Caco-2 (cell line): ENCODE measurements at regions of chr21 and their contacts with region 1.

Region 1: GRCh38 chr21:15552914-15553494 is 176.8 kb upstream of the USP25 start:
- DNase-seq: no peak
- H3K4me3 ChIP-seq: no peak overlapping the region
- H3K4me3 Mint-ChIP-seq: no peak overlapping the region
- H3K27ac Mint-ChIP-seq: no peak overlapping the region
- H3K4me1 ChIP-seq: no peaks in the 10 kb centered on the region
- H3K4me1 Mint-ChIP-seq: peaks cover 7% of the 10 kb centered on the region
- H3K27me3 ChIP-seq: no peaks in the 10 kb centered on the region
- H3K27me3 Mint-ChIP-seq: no peaks in the 10 kb centered on the region
- CTCF ChIP-seq: peak; percentile 43 to 47

Region 2: GRCh38 chr21:15353546-15353945 is 199.5 kb before region 1 on chr21:
- CTCF ChIA-PET with region 1: no interaction called
- POLR2A ChIA-PET with region 1: no interaction called
- intact Hi-C with region 1: no loop called
- DNase-seq: no peak
- H3K4me3 ChIP-seq: no peak overlapping the region
- H3K4me3 Mint-ChIP-seq: no peak overlapping the region
- H3K27ac Mint-ChIP-seq: no peak overlapping the region
- H3K4me1 ChIP-seq: no peaks in the 10 kb centered on the region
- H3K4me1 Mint-ChIP-seq: no peaks in the 10 kb centered on the region
- H3K27me3 ChIP-seq: no peaks in the 10 kb centered on the region
- H3K27me3 Mint-ChIP-seq: no peaks in the 10 kb centered on the region
- CTCF ChIP-seq: no peak

Region 3: GRCh38 chr21:15496501-15496900 is 56.5 kb before region 1 on chr21:
- CTCF ChIA-PET with region 1: no interaction called
- POLR2A ChIA-PET with region 1: no interaction called
- intact Hi-C with region 1: no loop called
- DNase-seq: no peak
- H3K4me3 ChIP-seq: no peak overlapping the region
- H3K4me3 Mint-ChIP-seq: no peak overlapping the region
- H3K27ac Mint-ChIP-seq: no peak overlapping the region
- H3K4me1 ChIP-seq: no peaks in the 10 kb centered on the region
- H3K4me1 Mint-ChIP-seq: peaks cover 5% of the 10 kb centered on the region
- H3K27me3 ChIP-seq: no peaks in the 10 kb centered on the region
- H3K27me3 Mint-ChIP-seq: no peaks in the 10 kb centered on the region
- CTCF ChIP-seq: no peak

Region 4: DNA sequence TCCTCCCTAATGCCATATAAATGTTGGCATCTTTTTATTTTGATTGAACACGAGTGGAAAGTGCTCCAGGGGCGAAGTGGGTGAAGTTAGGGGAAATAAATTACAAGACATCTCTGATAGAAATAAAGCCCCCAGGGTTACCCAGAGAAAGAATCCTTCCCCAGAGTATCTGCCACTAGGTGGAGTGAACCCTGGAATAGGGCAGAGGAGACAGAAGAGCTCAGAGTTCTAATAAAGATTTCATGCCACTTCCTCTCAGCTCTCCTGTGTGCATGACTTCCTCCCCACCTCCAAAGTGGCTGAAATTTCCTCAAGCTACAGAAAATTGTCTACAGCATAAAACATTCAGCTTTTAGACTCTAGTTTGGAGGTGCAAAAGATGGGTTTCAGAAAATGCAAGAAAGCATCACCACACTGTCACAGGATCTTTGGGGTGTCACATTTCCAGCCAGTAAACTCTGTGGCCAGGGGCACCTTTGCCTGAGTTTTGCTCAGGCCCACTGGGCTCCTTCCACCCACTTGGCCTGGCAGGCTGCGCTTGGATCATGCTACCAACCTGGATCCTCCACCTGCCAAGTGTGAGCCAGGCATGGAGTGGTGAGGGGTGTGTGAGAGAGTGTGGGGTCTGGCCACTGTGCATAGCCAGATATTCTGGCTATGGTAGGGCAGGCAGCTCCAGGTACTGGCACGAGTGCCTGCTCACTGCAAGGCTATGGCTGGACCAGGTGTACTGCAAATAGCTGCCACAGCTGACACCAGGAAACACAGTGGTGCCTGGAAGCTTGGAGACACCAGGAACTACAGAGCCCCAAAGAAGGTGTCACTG is 32.0 kb before region 1 on chr21:
- CTCF ChIA-PET with region 1: interaction called, 14 read pairs
- POLR2A ChIA-PET with region 1: no interaction called
- intact Hi-C with region 1: no loop called
- DNase-seq: peak in 1 of 2 experiments; percentile 12
- H3K4me3 ChIP-seq: no peak overlapping the region
- H3K4me3 Mint-ChIP-seq: no peak overlapping the region
- H3K27ac Mint-ChIP-seq: no peak overlapping the region
- H3K4me1 ChIP-seq: no peaks in the 10 kb centered on the region
- H3K4me1 Mint-ChIP-seq: no peaks in the 10 kb centered on the region
- H3K27me3 ChIP-seq: no peaks in the 10 kb centered on the region
- H3K27me3 Mint-ChIP-seq: no peaks in the 10 kb centered on the region
- CTCF ChIP-seq: peak in 1 of 2 experiments; percentile 41

Region 5: GRCh38 chr21:15539376-15539775 is 13.6 kb before region 1 on chr21:
- CTCF ChIA-PET with region 1: no interaction called
- POLR2A ChIA-PET with region 1: no interaction called
- intact Hi-C with region 1: no loop called
- DNase-seq: no peak
- H3K4me3 ChIP-seq: no peak overlapping the region
- H3K4me3 Mint-ChIP-seq: no peak overlapping the region
- H3K27ac Mint-ChIP-seq: no peak overlapping the region
- H3K4me1 ChIP-seq: no peaks in the 10 kb centered on the region
- H3K4me1 Mint-ChIP-seq: no peaks in the 10 kb centered on the region
- H3K27me3 ChIP-seq: no peaks in the 10 kb centered on the region
- H3K27me3 Mint-ChIP-seq: peaks cover 3% of the 10 kb centered on the region
- CTCF ChIP-seq: no peak

Region 6: DNA sequence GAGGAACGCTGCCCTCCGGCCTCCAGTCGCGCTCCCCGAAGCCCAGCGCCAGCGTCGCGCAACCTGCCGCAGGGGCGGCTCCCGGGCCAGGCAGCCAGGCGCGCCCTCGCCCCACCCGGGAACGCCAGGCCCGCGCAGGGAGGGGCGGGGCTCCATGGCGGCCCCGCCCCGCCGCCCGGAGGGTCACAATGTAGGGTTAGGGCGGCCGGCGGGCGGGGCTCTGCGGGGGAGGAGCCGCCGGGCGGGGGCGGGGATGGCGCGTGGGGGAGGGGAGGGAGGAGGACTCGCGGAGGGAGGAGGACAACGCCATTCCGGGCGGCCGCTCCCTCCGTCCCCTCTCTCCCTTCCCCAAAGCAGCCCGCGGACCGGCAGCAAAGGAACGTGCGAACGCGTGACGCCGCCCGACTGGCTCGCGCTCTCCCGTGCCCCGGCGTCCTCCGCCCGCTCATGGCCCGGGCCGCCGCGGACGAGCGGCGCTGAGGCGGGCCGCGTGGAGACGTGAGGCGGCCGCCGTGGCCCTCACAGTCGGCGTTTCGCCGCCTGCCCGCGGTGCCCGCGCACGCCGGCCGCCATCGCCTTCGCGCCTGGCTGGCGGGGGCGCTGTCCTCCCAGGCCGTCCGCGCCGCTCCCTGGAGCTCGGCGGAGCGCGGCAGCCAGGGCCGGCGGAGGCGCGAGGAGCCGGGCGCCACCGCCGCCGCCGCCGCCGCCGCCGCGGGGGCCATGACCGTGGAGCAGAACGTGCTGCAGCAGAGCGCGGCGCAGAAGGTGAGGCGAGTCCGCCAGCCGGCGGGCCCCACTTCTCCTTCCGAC is 176.9 kb after region 1 on chr21 and contains the start of gene USP25:
- CTCF ChIA-PET with region 1: no interaction called
- POLR2A ChIA-PET with region 1: no interaction called
- intact Hi-C with region 1: no loop called
- DNase-seq: peak; percentile 88 to 92
- H3K4me3 ChIP-seq: peak within 1 kb of the TSS; percentile 93
- H3K4me3 Mint-ChIP-seq: peak within 1 kb of the TSS; percentile 94
- H3K27ac Mint-ChIP-seq: peak within 1 kb of the TSS; percentile 93
- H3K4me1 ChIP-seq: peaks cover 10% of the 10 kb centered on the region
- H3K4me1 Mint-ChIP-seq: no peaks in the 10 kb centered on the region
- H3K27me3 ChIP-seq: no peaks in the 10 kb centered on the region
- H3K27me3 Mint-ChIP-seq: no peaks in the 10 kb centered on the region
- CTCF ChIP-seq: no peak
- total RNA-seq, gene USP25: 44.3 and 46.7 TPM in 2 replicates